MCF 10A (cell line): ENCODE measurements at regions of chr1 and their contacts with region 1.

Region 1: DNA sequence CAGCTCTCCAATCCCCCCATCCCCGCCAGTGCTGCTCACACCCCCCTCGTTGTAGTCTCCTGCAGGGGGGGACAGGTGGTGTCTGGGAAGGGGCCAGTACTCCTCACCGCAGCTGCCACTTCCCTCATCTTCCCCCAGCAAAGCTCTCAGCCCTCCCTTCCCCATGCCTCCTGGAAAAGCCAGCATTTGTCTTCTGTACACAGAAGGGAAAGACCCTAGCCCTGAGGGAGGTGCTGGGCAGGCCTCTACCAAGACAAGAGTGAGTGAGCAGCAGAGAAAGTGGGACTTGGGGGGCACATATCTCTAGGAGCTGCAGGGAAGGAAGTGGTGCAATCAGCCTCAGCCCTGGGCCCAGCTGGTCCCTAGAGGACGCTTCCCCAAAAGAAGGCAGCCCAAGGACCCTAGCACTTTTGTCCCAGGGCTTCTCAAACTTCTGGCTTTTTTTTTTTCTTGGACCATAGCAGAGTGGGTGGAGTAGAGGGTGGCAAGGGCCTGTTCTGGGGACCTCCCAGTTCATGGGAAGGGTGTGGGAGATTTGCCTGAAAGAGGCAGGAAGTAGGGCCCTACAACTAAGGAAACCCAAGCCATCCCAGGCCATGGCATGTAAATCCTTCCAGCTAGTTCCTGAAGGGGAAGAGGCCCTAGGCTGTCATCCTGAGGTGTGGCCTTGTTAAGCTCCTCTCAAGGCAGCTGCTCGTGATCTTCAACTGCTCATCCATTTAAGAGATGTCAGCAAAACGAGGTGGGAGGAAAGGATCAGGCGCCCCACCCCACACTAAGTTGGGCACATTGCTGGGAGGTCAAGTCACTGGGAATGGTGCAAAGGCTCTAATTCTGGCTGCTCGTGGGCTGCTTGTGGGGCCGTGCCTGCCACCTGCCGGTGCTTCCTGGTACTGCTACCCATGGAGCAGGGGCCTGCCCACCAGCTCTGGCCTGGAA is 12.6 kb downstream of the ZC3H12A start:
- DNase-seq: peak; percentile 86
- H3K4me3 Mint-ChIP-seq: no peak overlapping the region
- H3K27ac Mint-ChIP-seq: peak overlapping the region; percentile 37
- H3K4me1 Mint-ChIP-seq: peaks cover 27% of the 10 kb centered on the region
- H3K27me3 Mint-ChIP-seq: no peaks in the 10 kb centered on the region
- CTCF ChIP-seq: peak; percentile 98

Region 2: DNA sequence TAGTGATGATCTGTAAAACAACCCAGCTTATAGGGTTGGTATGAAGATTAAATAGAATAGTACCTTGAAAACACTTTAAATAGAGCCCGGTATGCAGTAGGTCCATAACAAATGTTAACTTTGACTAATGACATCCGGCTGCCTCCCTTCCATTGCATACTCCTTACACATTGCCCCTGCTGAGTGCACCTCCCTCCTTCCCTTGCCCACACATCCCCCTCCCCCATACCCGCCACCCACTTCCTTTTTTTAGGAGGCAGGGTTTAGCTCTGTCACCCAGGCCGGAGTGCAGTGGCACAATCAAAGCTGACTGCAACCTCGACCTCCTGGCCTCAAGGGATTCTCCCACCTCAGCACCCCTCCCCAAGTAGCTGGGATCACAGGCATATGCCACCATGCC is 37.0 kb before region 1 on chr1:
- CTCF ChIA-PET with region 1: interaction called, 234 read pairs
- POLR2A ChIA-PET with region 1: interaction called, 36 read pairs
- intact Hi-C with region 1: loop called (anchors 1 kb)
- DNase-seq: no peak
- H3K4me3 Mint-ChIP-seq: no peak overlapping the region
- H3K27ac Mint-ChIP-seq: peak overlapping the region; percentile 54
- H3K4me1 Mint-ChIP-seq: peaks cover 12% of the 10 kb centered on the region
- H3K27me3 Mint-ChIP-seq: no peaks in the 10 kb centered on the region
- CTCF ChIP-seq: no peak

Region 3: DNA sequence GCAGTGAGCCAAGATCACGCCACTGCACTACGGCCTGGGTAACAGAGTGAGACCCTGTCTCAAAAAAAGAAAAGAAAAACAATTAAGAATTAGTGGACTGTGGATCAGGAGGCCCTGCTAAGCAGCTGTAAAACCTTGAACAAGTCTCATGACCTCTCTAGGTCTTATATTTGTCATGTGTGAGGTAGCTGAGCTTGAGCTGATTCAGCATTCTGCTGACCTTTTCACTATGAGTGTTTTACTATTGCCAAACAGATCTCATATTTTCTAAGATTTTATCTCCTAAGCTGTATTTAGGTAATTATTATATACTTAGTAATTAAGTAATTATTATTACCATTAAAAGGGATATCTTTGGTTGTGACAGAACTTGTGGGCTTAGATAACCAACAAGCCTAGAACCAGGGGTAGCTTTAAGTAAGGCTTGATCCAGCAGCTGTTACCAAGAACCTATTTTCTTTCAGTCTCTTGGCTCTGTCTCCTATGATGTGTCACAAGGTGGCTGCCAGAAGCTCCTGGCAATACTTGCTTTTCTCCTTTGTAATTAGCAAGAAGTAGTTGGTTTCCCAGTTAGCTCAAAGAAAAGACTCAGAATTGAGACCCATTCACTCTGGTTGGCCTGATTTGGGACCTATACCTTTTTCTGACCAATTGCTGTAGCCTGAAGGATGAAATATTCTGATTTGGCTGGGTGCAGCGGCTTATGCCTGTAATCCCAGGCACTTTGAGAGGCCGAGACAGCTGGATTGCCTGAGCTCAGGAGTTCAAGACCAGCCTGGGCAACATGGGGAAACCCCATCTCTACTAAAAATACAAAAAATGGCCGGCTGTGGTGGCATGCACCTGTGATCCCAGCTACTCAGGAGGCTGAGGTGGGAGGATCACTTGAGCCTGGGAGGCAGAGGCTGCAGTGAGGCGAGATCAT is 21.1 kb before region 1 on chr1:
- CTCF ChIA-PET with region 1: interaction called, 144 read pairs
- POLR2A ChIA-PET with region 1: interaction called, 138 read pairs
- intact Hi-C with region 1: no loop called
- DNase-seq: peak; percentile 35
- H3K4me3 Mint-ChIP-seq: no peak overlapping the region
- H3K27ac Mint-ChIP-seq: no peak overlapping the region
- H3K4me1 Mint-ChIP-seq: peaks cover 4% of the 10 kb centered on the region
- H3K27me3 Mint-ChIP-seq: no peaks in the 10 kb centered on the region
- CTCF ChIP-seq: no peak

Region 4: DNA sequence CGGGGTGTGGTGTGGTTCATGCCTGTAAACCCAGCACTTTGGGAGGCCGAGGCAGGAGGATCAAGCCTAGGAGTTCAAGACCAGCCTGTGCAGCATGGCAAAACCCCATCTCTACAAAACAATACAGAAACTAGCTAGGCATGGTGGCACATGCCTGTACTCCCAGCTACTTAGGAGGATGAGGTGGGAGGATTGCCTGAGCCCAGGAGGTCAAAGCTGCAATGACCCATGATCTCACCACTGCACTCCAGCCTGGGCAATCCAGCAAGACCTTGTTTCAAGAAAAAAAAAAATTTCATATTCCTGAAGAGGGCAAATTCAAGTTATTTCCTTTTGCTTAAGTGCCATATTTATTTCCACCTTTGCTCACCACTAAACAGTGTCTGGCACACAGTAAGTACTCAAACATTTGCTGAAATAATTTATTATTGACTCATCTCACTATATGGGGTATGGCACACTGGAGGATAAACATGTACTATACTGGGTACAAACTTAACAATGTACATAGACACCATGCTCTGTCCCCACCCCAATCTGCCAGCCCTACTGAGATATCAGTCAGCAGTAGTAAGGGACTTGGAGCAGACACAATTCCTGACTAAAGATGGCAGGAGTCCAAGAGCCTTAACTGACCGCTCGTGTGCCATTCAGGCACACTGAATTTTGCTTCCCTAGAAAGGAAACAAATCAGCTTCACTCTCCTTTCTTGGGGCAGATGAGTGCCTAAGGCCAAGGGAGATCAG is 12.1 kb after region 1 on chr1:
- CTCF ChIA-PET with region 1: interaction called, 50 read pairs
- POLR2A ChIA-PET with region 1: interaction called, 9 read pairs
- intact Hi-C with region 1: no loop called
- DNase-seq: peak; percentile 70
- H3K4me3 Mint-ChIP-seq: no peak overlapping the region
- H3K27ac Mint-ChIP-seq: peak overlapping the region; percentile 59
- H3K4me1 Mint-ChIP-seq: peaks cover 7% of the 10 kb centered on the region
- H3K27me3 Mint-ChIP-seq: no peaks in the 10 kb centered on the region
- CTCF ChIP-seq: no peak

Region 5: DNA sequence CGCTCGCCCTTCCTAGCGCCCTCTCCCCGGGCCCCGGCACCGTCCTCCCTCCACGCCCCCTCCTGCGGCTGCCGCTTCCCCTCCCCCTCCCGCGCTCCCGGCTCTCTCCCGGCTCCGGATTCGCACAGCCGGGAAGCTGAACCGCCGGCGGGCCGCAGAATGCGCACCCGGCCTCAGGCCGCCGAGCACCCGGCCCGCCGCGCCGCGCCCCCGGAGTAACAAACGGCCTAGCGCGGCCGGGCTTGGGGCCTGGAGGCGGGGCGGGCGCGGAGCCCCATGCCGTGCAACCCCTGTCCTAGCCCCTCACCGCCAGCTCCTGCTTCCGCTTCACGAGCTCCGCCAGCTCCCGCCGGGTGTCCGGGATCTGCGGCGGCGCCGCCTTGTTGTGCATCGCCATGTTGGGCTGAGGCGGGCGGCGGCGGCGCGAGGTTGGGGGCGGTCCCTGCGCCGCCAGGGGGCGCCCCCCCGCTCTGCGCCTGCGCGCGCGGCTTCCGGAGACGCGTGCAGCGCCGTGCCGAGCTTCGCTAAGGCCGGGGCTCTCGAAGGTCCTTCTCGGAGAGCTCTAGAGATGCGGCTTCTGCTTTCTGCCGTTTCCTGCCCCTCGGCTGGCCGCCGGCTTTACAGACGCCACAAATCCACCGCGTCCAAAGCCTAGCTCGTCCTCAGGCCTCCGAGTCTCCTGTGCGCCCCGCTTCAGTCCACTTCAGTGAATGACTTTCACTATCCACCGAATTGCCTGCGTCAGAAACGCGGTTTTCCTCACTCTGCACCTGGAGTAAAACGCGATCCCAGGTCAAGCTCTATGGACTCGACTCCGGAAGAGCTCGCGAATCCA is 27.6 kb after region 1 on chr1 and contains the start of gene MEAF6:
- CTCF ChIA-PET with region 1: interaction called, 13 read pairs
- POLR2A ChIA-PET with region 1: interaction called, 36 read pairs
- intact Hi-C with region 1: no loop called
- DNase-seq: peak; percentile 80
- H3K4me3 Mint-ChIP-seq: peak within 1 kb of the TSS; percentile 82
- H3K27ac Mint-ChIP-seq: peak within 1 kb of the TSS; percentile 82
- H3K4me1 Mint-ChIP-seq: peaks cover 16% of the 10 kb centered on the region
- H3K27me3 Mint-ChIP-seq: no peaks in the 10 kb centered on the region
- CTCF ChIP-seq: peak; percentile 72
- total RNA-seq, gene MEAF6: 71.3 and 72.0 TPM in 2 replicates